ENCODE measurements at regions of chr5 and their contacts with region 1.

Region 1: DNA sequence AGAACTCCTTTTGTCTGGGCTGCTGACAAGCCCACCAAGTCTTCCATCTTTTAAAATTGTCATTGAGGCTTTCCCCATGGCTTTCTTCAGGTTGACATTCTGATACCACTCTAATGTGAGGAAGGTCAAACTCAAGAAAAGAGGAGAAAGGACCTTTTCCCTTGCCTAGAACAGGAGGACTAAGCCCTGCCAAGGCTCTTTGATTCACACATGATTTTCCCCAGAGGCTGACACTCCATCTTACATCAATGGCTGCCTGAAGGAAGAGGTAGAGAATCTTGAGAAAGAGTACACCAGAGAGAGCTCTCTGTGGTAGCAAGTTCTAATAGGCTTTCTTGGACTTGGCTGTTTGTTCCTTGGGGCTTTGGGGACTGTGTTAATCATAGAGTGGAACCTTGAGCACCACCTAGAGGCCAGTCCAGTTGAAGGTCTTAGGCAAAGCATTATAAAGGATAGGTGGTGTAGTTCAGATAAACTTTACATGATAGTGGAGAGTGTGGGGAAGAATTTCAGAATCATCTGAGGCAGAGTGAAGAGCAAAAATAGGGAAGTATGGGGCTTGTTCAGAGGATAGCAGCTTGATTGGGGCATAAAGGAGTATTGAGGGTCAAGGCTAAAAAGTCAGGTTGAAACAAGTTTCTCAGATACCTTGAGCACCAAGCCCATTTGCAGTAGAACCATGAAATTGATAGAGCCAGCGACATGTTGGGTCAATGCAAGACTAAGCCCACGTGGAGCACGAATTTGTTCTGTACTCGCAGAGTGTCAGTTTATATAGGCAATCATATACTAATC is 36.7 kb downstream of the NDFIP1 start:
- DNase-seq: peak; percentile 74
- ATAC-seq: peak; percentile 91
- H3K4me3 ChIP-seq: no peak overlapping the region
- H3K27ac ChIP-seq: no peak overlapping the region
- H3K4me1 ChIP-seq: no peaks in the 10 kb centered on the region
- H3K27me3 ChIP-seq: no peaks in the 10 kb centered on the region
- CTCF ChIP-seq: peak; percentile 81

Region 2: GRCh38 chr5:141855265-141856036 is 289.9 kb before region 1 on chr5:
- CTCF ChIA-PET with region 1: interaction called, 15 read pairs
- POLR2A ChIA-PET with region 1: no interaction called
- intact Hi-C with region 1: no loop called
- DNase-seq: no peak
- ATAC-seq: no peak; the same call in 1 of the 2 replicates
- H3K4me3 ChIP-seq: no peak overlapping the region
- H3K27ac ChIP-seq: no peak overlapping the region
- H3K4me1 ChIP-seq: no peaks in the 10 kb centered on the region; the same call in 1 of the 2 replicates
- H3K27me3 ChIP-seq: no peaks in the 10 kb centered on the region
- CTCF ChIP-seq: no peak

Region 3: DNA sequence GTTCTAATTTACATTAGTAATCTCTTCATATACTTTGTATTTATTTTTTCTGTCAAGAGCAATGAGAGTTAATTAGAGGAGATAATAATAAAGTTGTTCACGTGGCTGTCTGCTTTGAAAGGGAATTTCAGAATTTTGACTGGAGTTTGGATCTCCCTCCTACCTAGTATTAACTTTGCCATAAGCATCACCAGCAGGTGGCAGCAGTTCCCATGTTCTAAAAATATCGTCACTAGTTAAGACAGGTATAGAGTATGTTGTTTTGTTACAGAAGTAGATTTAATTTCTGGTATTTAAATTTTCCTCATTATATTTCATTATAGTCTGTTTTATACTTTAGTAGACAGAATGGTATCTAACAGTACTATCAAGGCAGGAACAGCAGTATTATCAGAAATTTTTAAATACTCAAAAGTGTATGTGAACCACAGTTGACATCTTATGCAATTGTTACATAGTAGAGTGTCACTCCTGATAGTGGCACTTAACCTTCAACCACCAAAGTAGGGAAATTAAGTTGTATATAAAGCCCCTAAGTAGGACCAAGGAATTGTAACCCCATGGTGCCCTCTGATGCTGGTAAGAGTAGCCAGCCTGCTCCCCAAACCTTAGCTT is 152.8 kb before region 1 on chr5:
- CTCF ChIA-PET with region 1: interaction called, 4 read pairs
- POLR2A ChIA-PET with region 1: interaction called, 3 read pairs
- intact Hi-C with region 1: loop called (anchors 1 kb)
- DNase-seq: peak; percentile 80
- ATAC-seq: peak; percentile 83
- H3K4me3 ChIP-seq: no peak overlapping the region
- H3K27ac ChIP-seq: no peak overlapping the region
- H3K4me1 ChIP-seq: no peaks in the 10 kb centered on the region
- H3K27me3 ChIP-seq: no peaks in the 10 kb centered on the region
- CTCF ChIP-seq: peak; percentile 82